Psoas muscle (tissue), 8 donors: ENCODE measurements at regions of chr4 and their contacts with region 1.

Region 1: DNA sequence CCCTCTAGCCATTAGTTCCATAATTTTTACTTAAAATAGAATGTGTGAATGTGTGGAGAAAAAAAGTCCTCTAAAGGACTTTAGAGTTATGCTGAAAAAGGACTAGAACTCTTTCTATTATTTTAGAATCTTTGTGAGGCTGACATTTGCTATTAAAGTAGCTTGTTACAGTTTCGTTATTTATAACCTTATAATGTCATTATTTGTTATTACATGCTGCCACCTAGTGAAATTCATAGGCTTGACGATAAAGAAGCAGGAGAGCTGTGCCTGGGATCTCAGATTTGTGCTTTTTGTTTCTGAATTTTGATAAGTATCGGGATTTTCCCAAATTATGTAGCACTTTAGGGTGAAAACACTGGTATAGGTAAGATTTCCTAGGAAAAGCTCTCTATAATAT is 38.5 kb upstream of the TAPT1 start:
- DNase-seq: no peak
- ATAC-seq: peak; percentile 63 to 91 (median 73)
- H3K4me3 ChIP-seq: no peak overlapping the region
- H3K27ac ChIP-seq: no peak overlapping the region
- H3K4me1 ChIP-seq: peaks cover 3% of the 10 kb centered on the region
- H3K27me3 ChIP-seq: no peaks in the 10 kb centered on the region
- CTCF ChIP-seq: peak; percentile 74

Region 2: GRCh38 chr4:15882675-15883086 is 382.1 kb before region 1 on chr4:
- intact Hi-C with region 1: loop called in 1 of 2 experiments (anchors 10 kb)
- DNase-seq: peak in 1 of 2 donors; percentile 57
- ATAC-seq: peak; percentile 83 to 97 (median 87)
- H3K4me3 ChIP-seq: no peak overlapping the region
- H3K27ac ChIP-seq: no peak overlapping the region
- H3K4me1 ChIP-seq: peaks cover 5% of the 10 kb centered on the region
- H3K27me3 ChIP-seq: no peaks in the 10 kb centered on the region
- CTCF ChIP-seq: peak; percentile 88

Region 3: GRCh38 chr4:16026160-16026761 is 238.5 kb before region 1 on chr4:
- intact Hi-C with region 1: loop called (anchors 1 to 2 kb)
- DNase-seq: no peak
- ATAC-seq: peak in 1 of 4 donors; percentile 71
- H3K4me3 ChIP-seq: no peak overlapping the region
- H3K27ac ChIP-seq: no peak overlapping the region
- H3K4me1 ChIP-seq: no peaks in the 10 kb centered on the region
- H3K27me3 ChIP-seq: peaks cover 0 to 2% (median 0%) of the 10 kb centered on the region in 3 donors
- CTCF ChIP-seq: peak; percentile 93

Region 4: DNA sequence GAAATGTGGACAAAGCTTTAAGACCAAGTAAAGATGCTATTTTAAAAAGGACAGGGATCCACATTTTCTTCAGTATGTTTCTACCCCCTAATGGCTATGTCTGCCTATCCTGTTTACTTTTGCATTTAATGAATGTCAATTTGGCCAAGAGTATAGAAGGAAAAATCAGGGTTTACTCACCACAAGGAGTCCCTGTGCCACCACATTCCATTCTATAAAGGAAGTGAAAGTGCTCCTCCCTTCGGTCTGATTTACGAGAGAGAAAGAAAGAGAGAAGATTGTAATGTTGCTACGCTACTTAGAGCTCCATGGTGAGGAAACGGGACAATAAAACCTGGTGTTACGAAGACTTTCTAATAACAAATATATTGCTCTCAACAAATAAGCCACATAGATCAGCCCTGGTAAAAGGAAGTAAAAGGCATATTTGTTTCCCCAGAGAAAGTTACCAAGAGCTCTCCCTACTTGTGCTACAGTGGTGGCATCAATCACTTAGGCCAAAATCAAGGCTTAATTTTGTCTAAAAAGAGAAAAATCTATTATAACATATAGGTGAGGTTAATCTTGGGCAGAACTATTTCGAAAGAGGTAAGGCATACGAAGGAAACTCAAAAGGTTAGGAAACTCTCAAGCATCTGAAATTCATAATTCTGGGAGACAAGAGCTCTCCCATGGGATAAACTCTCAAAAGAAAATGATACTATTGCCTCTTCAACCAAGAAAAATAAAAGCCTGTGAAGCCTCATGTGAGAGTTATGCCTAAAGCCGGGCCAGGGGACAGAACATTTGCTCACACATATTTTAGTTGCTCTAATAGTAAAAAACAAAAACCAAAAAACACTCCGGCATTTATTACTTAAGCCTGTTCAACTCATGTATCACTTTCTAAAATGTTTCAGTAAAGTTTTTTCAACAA is 68.1 kb before region 1 on chr4:
- intact Hi-C with region 1: loop called (anchors 1 to 10 kb)
- DNase-seq: no peak
- ATAC-seq: peak; percentile 73 to 89 (median 82)
- H3K4me3 ChIP-seq: peak overlapping the region; percentile 10
- H3K27ac ChIP-seq: peak overlapping the region; percentile 5
- H3K4me1 ChIP-seq: peaks cover 36% of the 10 kb centered on the region
- H3K27me3 ChIP-seq: no peaks in the 10 kb centered on the region
- CTCF ChIP-seq: peak; percentile 38

Region 5: GRCh38 chr4:16225863-16226815 is 38.7 kb before region 1 on chr4 and contains the start of gene TAPT1:
- intact Hi-C with region 1: loop called in 1 of 2 experiments (anchors 5 kb)
- DNase-seq: peak; percentile 85 to 92
- ATAC-seq: peak; percentile 76 to 83 (median 80)
- H3K4me3 ChIP-seq: peak within 1 kb of the TSS; percentile 86
- H3K27ac ChIP-seq: peak within 1 kb of the TSS; percentile 98
- H3K4me1 ChIP-seq: peaks cover 43% of the 10 kb centered on the region
- H3K27me3 ChIP-seq: no peaks in the 10 kb centered on the region
- CTCF ChIP-seq: no peak
- total RNA-seq, gene TAPT1: 43.6 to 70.5 (median 53.2) TPM

Region 6: GRCh38 chr4:16686195-16686594 is 421.4 kb after region 1 on chr4:
- intact Hi-C with region 1: no loop called
- DNase-seq: no peak
- ATAC-seq: no peak
- H3K4me3 ChIP-seq: no peak overlapping the region
- H3K27ac ChIP-seq: no peak overlapping the region
- H3K4me1 ChIP-seq: no peaks in the 10 kb centered on the region
- H3K27me3 ChIP-seq: no peaks in the 10 kb centered on the region
- CTCF ChIP-seq: no peak